HepG2 (cell line): ENCODE measurements at regions of chr16 and their contacts with region 1.

Region 1: DNA sequence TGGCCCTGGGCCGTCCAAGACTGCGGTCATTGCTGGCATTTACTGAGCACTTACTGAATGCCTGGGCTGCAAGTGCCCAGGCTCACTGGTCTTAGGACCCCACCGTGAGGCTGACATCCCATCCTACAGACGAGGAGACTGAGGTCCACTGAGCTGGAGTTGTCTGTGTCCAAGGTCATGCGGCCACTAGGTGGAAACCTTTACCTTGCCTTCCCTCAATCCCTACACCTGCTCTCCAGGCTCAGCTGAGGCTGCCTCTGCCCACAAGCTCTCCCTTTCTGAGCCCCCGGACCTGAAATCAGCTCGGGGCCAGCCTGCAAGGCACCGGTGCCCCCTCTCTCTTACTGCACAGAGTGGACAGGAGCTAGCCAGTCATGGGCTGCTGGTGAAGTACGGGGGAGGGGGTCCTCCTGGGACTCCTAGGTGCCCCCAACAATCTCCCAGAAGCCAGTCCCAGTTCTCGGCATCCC is 1.5 kb downstream of the CASKIN1 start:
- DNase-seq: peak; percentile 67
- ATAC-seq: peak; percentile 68
- H3K4me3 ChIP-seq: peak overlapping the region; percentile 9 to 66 (median 53); a peak in 4 of 6 replicates
- H3K27ac ChIP-seq: no peak overlapping the region
- H3K4me1 ChIP-seq: peaks cover 59% of the 10 kb centered on the region
- H3K27me3 ChIP-seq: peaks cover 2 to 33% of the 10 kb centered on the region in 2 experiments; a peak in 3 of 5 replicates
- CTCF ChIP-seq: peak; percentile 93
- EP300 ChIP-seq: no peak
- POLR2A ChIP-seq: no peak
- RAD21 ChIP-seq: peak; percentile 77

Region 2: GRCh38 chr16:2160915-2161551 is 33.9 kb before region 1 on chr16:
- CTCF ChIA-PET with region 1: no interaction called
- POLR2A ChIA-PET with region 1: interaction called, 29 read pairs
- in situ Hi-C with region 1: no loop called
- intact Hi-C with region 1: loop called (anchors 5 kb)
- DNase-seq: peak; percentile 53
- ATAC-seq: peak; percentile 17
- H3K4me3 ChIP-seq: peak overlapping the region in 2 of 3 experiments; percentile 26 to 48; a peak in 2 of 6 replicates
- H3K27ac ChIP-seq: peak overlapping the region; percentile 63
- H3K4me1 ChIP-seq: peaks cover 85% of the 10 kb centered on the region
- H3K27me3 ChIP-seq: no peaks in the 10 kb centered on the region; a peak in 1 of 5 replicates
- CTCF ChIP-seq: no peak
- EP300 ChIP-seq: no peak
- POLR2A ChIP-seq: no peak
- RAD21 ChIP-seq: no peak; the same call in 1 of the 2 replicates

Region 3: GRCh38 chr16:2610781-2611498 is 416.1 kb after region 1 on chr16:
- CTCF ChIA-PET with region 1: no interaction called
- POLR2A ChIA-PET with region 1: no interaction called
- in situ Hi-C with region 1: no loop called
- intact Hi-C with region 1: no loop called
- DNase-seq: no peak
- ATAC-seq: no peak
- H3K4me3 ChIP-seq: no peak overlapping the region
- H3K27ac ChIP-seq: no peak overlapping the region
- H3K4me1 ChIP-seq: no peaks in the 10 kb centered on the region
- H3K27me3 ChIP-seq: no peaks in the 10 kb centered on the region
- CTCF ChIP-seq: no peak
- EP300 ChIP-seq: no peak
- POLR2A ChIP-seq: peak in 1 of 2 experiments; percentile 25; a peak in 1 of 4 replicates
- RAD21 ChIP-seq: no peak